Activated T-helper 1 cell treated with anti-CD3 and anti-CD28 coated beads, Interleukin-12 subunit alpha, Interleukin-12 subunit beta, Interleukin-2, Interleukin-4 antibody, amounts not matched to agents 30 ng/mL and 10 ng/mL and 1 ng/mL, durations not matched to agents 14 hours and 24 hours and 36 hours (primary cell): ENCODE measurements at regions of chr11 and their contacts with region 1.

Region 1: DNA sequence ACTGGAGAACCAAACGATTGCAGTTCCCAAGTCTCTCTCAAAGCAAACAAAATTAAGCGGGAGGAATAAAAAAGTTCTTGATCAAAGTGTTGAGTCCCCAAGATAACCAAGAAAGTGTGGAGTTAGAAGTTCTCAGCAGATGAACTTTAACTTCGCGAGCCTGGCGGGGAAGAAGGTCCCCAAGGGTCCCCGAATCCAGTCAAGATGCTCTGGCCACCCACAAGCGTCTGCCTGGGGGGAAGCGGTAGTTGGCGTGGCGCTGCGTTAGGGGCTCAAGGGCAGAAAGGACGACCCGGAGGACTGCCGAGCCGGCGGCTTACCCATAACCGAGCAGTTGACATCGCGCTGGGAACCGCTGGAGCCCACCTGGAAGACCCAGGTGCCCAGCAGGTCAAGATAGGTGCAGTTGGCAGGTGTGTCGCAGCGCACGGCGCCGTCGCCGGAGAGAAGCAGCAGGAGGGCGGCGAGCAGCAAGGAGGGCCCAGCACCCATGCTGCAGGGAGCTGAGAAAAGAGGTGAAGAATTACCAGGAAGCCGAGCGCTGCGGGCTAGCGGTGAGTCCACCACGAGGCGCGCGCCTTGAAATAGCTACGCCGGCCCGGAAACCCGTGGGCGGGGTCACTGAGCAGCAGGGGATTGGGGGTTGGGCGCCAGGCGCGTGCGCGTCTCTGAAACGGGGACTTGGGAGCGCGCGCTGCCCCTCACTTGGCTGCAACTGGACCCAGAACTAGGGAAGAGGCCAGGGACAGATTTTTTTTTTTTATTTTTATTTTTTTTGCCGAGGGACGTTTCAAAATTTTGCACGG is at the start of gene CTSC:
- DNase-seq: peak; percentile 91
- H3K4me3 Mint-ChIP-seq: peak within 1 kb of the TSS; percentile 90
- H3K27ac Mint-ChIP-seq: peak within 1 kb of the TSS; percentile 94
- H3K4me1 Mint-ChIP-seq: peaks cover 68% of the 10 kb centered on the region
- H3K27me3 Mint-ChIP-seq: no peaks in the 10 kb centered on the region
- total RNA-seq, gene CTSC: 99.4 and 99.6 TPM in 2 replicates

Region 2: DNA sequence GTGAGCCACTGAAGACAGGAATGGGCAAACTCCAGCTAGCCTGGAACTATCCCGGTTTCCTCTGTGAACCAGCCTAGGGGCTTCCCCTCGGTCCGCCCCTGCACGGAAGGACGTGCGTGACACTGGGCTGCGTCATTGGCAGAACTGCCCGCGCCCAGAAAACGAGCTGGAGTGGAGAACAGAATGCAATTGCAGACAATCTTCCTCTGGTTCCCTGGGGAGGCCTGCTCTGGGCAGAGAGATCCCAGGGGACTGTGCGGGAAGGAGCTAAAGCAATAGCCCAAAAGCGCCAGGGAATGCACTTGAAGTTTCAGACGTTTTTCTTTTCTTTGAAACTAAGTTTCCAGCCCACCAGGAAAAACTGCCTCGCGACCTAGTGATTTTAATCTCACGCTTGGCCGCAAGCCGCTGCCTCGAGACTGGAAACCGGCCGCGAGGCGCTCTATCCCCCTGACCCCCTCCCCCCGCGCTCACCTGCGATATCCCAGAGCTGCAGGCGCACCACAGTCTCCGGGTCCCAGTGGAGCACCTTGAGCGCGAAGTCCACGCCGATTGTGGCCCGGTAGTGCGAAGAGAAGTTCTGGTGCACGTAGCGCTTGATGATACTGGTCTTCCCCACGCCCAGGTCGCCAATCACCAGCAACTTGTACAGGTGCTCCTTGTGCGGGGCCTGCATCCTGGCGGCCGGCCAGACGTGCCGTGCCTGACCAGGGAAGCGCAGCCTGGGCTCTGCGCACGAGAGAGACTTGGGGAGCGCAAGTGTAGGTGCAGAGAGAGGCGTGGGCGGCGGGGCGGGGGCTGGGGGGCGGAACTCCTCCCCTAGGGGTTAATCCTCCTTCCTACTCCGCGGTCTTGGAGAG is 162.4 kb before region 1 on chr11 and contains the start of gene RAB38:
- intact Hi-C with region 1: loop called (anchors 1 kb)
- DNase-seq: peak; percentile 32
- H3K4me3 Mint-ChIP-seq: peak within 1 kb of the TSS; percentile 83
- H3K27ac Mint-ChIP-seq: peak within 1 kb of the TSS; percentile 73
- H3K4me1 Mint-ChIP-seq: peaks cover 52% of the 10 kb centered on the region
- H3K27me3 Mint-ChIP-seq: no peaks in the 10 kb centered on the region
- total RNA-seq, gene RAB38: 2.0 and 2.8 TPM in 2 replicates

Region 3: GRCh38 chr11:88301488-88302140 is 35.8 kb before region 1 on chr11:
- intact Hi-C with region 1: loop called (anchors 1 kb)
- DNase-seq: no peak
- H3K4me3 Mint-ChIP-seq: peak overlapping the region; percentile 1
- H3K27ac Mint-ChIP-seq: peak overlapping the region; percentile 95
- H3K4me1 Mint-ChIP-seq: peaks cover 50% of the 10 kb centered on the region
- H3K27me3 Mint-ChIP-seq: no peaks in the 10 kb centered on the region

Region 4: DNA sequence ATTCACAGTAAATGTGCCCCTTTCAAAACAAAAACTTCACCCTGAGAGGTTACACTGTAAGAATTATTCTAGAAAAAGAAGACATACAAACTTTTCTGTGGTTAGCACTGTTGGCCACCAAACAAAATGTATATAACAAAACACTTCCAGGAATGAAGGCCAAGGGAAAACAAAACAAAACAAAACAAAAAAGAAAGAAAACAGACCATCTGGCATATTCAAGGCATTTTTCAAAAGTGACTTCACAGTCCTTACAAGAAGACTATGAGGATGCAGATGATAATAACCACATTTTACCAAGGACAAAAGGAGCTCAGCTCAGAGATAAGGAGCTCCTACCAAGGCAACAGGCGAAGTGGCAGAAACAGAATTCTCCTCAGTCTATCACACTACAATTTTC is 24.8 kb before region 1 on chr11:
- intact Hi-C with region 1: no loop called
- DNase-seq: no peak
- H3K4me3 Mint-ChIP-seq: peak overlapping the region; percentile 32
- H3K27ac Mint-ChIP-seq: peak overlapping the region; percentile 37
- H3K4me1 Mint-ChIP-seq: peaks cover 55% of the 10 kb centered on the region
- H3K27me3 Mint-ChIP-seq: no peaks in the 10 kb centered on the region

Region 5: GRCh38 chr11:88357323-88358039 is 20.1 kb after region 1 on chr11:
- intact Hi-C with region 1: loop called (anchors 1 kb)
- DNase-seq: no peak
- H3K4me3 Mint-ChIP-seq: peak overlapping the region; percentile 45
- H3K27ac Mint-ChIP-seq: peak overlapping the region; percentile 59
- H3K4me1 Mint-ChIP-seq: peaks cover 52% of the 10 kb centered on the region
- H3K27me3 Mint-ChIP-seq: no peaks in the 10 kb centered on the region

Region 6: DNA sequence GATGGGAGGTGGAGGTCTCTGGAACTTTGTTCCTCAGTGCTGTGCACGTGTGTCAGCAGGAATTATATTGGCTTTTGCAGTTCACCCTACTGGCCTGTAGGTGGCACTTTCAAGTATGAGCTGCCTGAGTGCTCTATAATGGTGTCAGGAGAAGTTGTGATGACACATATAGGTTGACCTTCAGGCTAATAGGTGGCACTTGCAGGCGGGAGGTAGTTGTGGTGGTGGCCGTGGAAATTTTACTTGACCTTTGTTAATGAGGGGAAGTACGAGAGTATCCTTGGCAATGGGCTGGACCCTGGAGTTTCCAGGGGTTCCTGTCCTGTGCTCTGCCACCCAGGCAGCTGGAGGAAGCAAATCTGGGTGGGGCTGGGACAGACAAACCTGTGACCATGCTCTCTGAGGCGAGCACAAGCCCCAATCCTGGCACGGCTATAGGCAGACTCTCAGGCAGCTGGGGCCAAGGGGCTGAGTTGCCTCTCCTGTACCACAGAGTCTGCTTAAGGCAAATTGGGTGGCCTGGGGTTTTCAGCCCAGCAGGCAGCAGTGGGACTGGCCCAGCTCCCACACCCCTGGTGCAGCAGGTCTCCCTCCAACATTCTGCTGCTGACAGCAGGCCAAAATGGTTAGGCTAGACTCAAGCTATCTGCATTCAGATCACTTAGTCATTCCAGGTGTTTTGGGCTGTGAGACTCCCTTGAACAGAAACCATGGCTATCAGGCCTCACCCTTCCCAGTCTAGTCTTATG is 147.7 kb after region 1 on chr11:
- intact Hi-C with region 1: loop called (anchors 5 kb)
- DNase-seq: no peak
- H3K4me3 Mint-ChIP-seq: no peak overlapping the region
- H3K27ac Mint-ChIP-seq: no peak overlapping the region
- H3K4me1 Mint-ChIP-seq: peaks cover 13% of the 10 kb centered on the region
- H3K27me3 Mint-ChIP-seq: no peaks in the 10 kb centered on the region

Region 7: DNA sequence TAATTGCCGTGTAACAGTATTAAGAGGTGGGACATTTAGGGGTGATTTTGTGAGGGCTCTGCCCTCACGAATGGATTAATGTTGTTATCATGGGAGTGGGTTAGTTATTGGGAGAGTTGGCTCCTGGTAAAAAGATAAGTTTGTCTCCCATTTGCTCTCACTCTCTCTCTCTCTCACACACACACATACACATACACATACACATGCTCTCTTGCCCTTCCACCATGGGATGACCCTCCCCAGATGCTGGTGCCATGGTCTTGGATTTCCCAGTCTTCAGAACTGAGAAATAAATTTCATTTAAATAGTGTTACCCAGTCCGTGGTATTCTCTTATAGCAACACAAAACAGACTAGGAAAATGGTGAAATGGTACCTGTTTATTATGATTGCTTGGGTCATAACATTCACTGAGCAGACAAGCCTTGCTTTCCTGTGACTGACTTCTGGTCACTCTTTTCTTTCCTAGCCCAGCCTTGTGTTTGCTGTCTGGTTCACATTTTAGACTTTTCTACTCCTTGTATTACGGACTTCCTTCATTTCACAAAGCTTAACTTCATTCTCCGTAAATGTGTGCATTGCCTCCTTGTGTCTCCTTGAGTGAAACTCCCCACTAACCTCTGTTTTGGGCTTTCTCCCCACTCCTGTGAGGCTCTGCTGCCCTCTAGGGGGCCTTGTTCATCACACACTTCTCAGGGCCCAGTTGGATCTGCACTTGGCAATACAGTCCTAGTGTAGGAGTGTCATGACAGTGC is 206.7 kb after region 1 on chr11:
- intact Hi-C with region 1: loop called (anchors 1 kb)
- DNase-seq: peak; percentile 72
- H3K4me3 Mint-ChIP-seq: no peak overlapping the region
- H3K27ac Mint-ChIP-seq: peak overlapping the region; percentile 3
- H3K4me1 Mint-ChIP-seq: peaks cover 7% of the 10 kb centered on the region
- H3K27me3 Mint-ChIP-seq: peaks cover 10% of the 10 kb centered on the region

Region 8: DNA sequence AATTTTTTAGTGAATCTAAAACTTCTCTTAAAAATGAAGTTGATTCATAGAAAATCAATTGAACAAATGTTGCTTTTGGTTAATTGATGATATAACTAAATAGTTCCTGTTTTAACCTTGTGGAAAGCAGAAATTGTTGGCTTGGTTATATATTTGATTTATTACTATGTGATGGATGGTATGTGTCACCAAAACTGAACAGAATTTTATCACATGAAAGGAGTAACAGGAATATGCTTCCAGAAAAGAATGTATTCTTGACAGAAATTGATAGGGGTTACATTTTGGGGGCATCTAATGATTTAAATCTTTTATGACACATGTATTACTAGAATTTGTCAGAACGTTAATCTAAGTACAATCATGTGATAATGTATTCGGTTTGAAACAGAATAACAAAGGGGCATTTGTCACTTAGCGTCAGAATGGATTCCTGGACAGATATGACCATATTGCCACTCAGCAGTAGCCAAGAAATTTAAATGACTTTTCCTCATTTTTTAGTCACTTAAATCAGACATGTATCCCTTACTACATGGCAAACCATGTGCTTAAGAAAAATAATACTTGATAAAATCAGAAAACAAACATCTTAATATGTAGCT is 433.2 kb after region 1 on chr11:
- intact Hi-C with region 1: no loop called
- DNase-seq: no peak
- H3K4me3 Mint-ChIP-seq: no peak overlapping the region
- H3K27ac Mint-ChIP-seq: no peak overlapping the region
- H3K4me1 Mint-ChIP-seq: no peaks in the 10 kb centered on the region
- H3K27me3 Mint-ChIP-seq: no peaks in the 10 kb centered on the region